Psoas muscle (tissue), 8 donors: ENCODE measurements at regions of chr19 and their contacts with region 1.

Region 1: DNA sequence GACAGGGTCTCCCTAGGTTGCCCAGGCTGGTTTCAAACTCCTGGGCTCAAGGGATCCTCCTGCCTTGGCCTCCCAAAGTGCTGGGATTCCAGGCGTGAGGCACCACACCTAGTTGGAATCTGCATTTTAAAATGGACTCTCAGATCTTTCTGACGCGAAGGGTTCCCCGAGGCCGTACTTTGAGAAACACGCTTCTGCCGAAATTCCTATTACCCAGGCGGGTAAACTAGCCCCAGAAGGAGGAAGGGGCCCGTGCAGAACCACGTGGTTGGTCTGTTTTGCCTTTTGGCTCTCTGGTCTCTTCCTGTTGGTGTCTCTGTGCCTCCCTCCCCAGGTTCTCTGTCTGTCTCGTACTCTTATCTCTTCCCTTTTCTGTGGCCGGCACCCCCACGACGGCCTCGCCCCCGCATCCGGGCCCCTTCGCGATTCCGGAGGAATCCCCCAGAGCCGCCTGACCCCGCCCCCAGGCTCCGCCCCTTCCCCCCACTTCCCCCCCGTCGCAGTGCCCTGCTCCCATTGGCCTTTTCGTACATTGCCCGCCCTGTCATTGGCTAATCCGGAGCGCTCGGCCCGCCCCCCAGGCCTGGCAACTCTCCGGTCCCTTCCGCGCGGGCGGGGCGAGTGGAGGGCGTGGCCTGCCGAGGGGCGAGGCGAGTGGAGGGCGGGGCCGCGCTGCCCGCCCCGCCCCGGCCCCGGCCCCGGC is at the start of gene TNFAIP8L1:
- DNase-seq: peak; percentile 97 to 98
- ATAC-seq: peak; percentile 94 to 95 (median 94)
- H3K4me3 ChIP-seq: peak within 1 kb of the TSS; percentile 85
- H3K27ac ChIP-seq: peak within 1 kb of the TSS; percentile 78
- H3K4me1 ChIP-seq: peaks cover 10% of the 10 kb centered on the region
- H3K27me3 ChIP-seq: no peaks in the 10 kb centered on the region
- CTCF ChIP-seq: no peak
- total RNA-seq, gene TNFAIP8L1: 3.1 to 5.1 (median 3.8) TPM

Region 2: GRCh38 chr19:3942790-3943409 is 696.1 kb before region 1 on chr19:
- intact Hi-C with region 1: no loop called
- DNase-seq: peak; percentile 71 to 83
- ATAC-seq: peak; percentile 80 to 85 (median 84)
- H3K4me3 ChIP-seq: no peak overlapping the region
- H3K27ac ChIP-seq: peak overlapping the region; percentile 99
- H3K4me1 ChIP-seq: peaks cover 14% of the 10 kb centered on the region
- H3K27me3 ChIP-seq: peaks cover 0 to 3% (median 0%) of the 10 kb centered on the region in 3 donors
- CTCF ChIP-seq: no peak

Region 3: DNA sequence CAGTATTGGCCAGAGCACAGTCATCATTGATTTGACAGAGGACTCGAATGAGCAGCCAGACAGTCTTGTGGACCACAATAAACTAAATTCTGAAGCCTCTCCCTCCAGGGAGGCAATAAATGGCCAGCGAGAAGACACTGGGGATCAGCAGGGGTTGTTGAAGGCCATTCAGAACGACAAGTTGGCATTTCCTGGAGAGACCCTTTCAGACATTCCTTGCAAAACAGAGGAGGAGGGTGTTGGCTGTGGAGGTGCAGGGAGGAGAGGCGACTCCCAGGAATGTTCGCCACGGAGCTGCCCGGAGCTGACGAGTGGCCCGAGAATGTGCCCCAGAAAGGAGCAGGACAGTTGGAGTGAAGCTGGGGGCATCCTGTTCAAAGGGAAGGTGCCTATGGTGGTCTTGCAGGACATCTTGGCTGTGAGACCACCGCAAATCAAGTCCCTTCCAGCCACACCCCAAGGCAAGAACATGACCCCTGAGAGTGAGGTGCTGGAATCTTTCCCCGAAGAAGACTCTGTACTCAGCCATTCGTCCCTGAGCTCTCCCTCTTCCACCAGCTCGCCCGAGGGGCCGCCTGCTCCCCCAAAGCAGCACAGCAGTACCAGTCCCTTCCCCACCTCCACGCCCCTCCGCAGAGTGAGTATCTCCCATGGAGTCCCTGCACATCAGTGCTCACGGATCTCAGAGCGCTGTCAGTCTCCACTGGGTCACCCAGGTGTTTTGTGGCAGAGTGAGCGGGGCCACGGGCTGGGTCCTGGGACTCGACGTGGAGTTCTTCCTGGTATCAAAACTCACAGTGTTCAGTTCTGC is 229.7 kb before region 1 on chr19:
- intact Hi-C with region 1: loop called in 1 of 2 experiments (anchors 5 kb)
- DNase-seq: no peak
- ATAC-seq: no peak
- H3K4me3 ChIP-seq: no peak overlapping the region
- H3K27ac ChIP-seq: no peak overlapping the region
- H3K4me1 ChIP-seq: no peaks in the 10 kb centered on the region
- H3K27me3 ChIP-seq: no peaks in the 10 kb centered on the region
- CTCF ChIP-seq: no peak

Region 4: GRCh38 chr19:4534836-4535658 is 103.9 kb before region 1 on chr19 and contains the start of gene PLIN5:
- intact Hi-C with region 1: loop called in 1 of 2 experiments (anchors 5 kb)
- DNase-seq: peak; percentile 84 to 95
- ATAC-seq: peak; percentile 77 to 84 (median 82)
- H3K4me3 ChIP-seq: peak within 1 kb of the TSS; percentile 66
- H3K27ac ChIP-seq: peak within 1 kb of the TSS; percentile 90
- H3K4me1 ChIP-seq: peaks cover 39% of the 10 kb centered on the region
- H3K27me3 ChIP-seq: no peaks in the 10 kb centered on the region
- CTCF ChIP-seq: no peak
- total RNA-seq, gene PLIN5: 61.7 to 143 (median 118) TPM

Region 5: DNA sequence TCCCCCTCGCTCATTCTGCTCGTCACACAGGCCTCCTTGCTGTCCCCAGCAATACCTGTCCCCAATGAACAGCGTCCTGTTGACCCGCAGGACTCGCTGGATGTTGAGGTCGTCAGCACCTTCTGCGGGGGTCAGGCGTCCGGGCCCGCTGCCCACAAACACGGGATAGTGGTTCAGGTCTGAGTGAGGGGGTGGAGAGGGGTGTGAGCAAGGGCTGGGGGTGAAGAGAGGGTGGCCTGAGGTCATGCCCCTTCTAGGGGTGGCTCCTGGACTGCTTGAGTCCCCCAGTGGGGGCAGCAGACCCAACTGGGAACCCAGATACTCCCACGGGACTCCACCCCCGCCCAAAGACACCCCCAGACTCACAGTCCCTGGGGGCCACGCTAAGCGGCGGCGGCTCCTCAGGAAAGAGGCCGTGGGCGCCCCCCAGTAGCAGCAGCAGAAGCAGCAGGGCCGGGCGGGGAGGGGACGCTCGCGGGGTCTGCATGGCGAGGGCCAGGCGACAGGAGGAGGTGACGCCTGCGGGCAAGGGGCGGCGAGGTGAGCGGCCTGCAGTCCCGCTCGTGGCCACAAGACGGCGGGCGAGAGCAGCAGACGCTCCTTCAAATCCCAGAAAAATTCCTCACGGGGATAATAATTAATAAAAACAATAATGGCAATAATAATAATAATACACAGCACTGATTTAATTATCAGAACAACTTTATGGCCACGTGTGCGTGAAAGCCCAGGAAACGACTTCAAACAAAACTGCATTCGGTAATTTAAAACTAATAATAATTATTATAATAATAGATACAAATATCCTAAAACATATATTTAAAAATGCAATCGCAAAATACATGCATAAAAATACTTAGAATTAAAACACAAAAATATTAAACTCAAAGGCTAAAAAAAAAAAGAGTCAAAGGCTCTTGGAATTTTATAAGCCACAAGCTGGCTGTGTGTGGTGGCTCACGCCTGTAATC is 80.7 kb before region 1 on chr19:
- intact Hi-C with region 1: loop called in 1 of 2 experiments (anchors 5 kb)
- DNase-seq: no peak
- ATAC-seq: peak in 3 of 4 donors; percentile 46 to 55 (median 47)
- H3K4me3 ChIP-seq: peak overlapping the region; percentile 62
- H3K27ac ChIP-seq: no peak overlapping the region
- H3K4me1 ChIP-seq: peaks cover 8% of the 10 kb centered on the region
- H3K27me3 ChIP-seq: no peaks in the 10 kb centered on the region
- CTCF ChIP-seq: peak; percentile 100

Region 6: DNA sequence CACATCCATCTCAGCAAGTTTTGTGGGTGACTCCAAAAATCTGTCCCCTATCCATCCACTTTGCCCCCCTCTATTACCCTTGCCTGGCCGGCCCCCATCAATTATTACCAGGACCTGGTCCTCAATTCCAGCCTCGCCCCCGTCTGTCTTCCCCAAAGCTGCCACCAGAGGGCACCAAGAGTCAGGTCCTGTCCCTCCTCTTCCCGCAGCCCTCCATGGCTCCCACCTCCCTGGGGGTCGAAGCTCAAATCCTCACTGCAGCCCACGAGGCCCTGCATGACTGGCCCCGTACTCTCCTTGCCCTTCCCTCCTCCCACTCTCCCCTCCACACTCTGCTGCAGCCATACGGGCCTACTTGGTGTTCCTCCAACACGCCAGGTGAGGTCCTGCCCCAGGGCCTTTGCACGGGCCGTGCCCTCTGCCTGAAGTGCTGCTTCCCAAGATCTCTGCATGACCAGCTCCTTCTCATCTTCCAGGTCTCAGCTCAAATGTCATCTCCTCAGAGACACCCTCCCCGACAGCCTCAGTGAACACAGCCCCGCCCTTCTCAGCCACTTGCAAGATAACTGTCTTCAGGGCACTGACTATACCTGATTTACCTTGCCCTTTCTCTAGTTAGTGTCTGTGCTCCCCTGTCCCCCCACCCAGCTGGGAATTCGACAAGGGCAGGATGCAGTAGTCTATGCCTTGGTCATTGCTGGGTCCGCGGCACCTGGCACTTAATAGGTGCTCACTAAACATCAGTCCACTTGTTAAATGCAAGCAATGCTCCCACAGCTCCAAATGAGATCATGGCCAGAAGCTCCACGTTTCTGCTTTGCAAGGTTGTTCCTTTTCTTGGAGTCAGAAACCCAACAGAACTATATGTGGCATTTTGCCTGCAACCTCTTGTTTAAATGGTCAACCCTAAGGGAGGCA is 62.7 kb before region 1 on chr19:
- intact Hi-C with region 1: loop called (anchors 2 to 5 kb)
- DNase-seq: peak; percentile 70 to 80
- ATAC-seq: peak; percentile 59 to 78 (median 65)
- H3K4me3 ChIP-seq: no peak overlapping the region
- H3K27ac ChIP-seq: peak overlapping the region; percentile 69
- H3K4me1 ChIP-seq: no peaks in the 10 kb centered on the region
- H3K27me3 ChIP-seq: peaks cover 0 to 18% (median 9%) of the 10 kb centered on the region in 3 donors
- CTCF ChIP-seq: peak; percentile 70